ENCODE measurements at regions of chr12 and their contacts with region 1.

Region 1: GRCh38 chr12:674272-674781 is 11.1 kb upstream of the NINJ2 start:
- DNase-seq: peak; percentile 90
- ATAC-seq: peak; percentile 92
- H3K4me3 Mint-ChIP-seq: peak overlapping the region; percentile 55
- H3K27ac Mint-ChIP-seq: peak overlapping the region; percentile 98
- H3K4me1 Mint-ChIP-seq: peaks cover 74% of the 10 kb centered on the region
- H3K27me3 Mint-ChIP-seq: no peaks in the 10 kb centered on the region

Region 2: GRCh38 chr12:685388-685787 is 11.1 kb after region 1 on chr12:
- CTCF ChIA-PET with region 1: interaction called, 11 read pairs
- DNase-seq: peak; percentile 95
- ATAC-seq: peak; percentile 92
- H3K4me3 Mint-ChIP-seq: peak overlapping the region; percentile 29
- H3K27ac Mint-ChIP-seq: peak overlapping the region; percentile 93
- H3K4me1 Mint-ChIP-seq: peaks cover 39% of the 10 kb centered on the region
- H3K27me3 Mint-ChIP-seq: no peaks in the 10 kb centered on the region

Region 3: GRCh38 chr12:724194-724855 is 50.0 kb after region 1 on chr12:
- CTCF ChIA-PET with region 1: interaction called, 10 read pairs
- DNase-seq: no peak
- ATAC-seq: peak; percentile 86
- H3K4me3 Mint-ChIP-seq: no peak overlapping the region
- H3K27ac Mint-ChIP-seq: peak overlapping the region; percentile 75
- H3K4me1 Mint-ChIP-seq: peaks cover 54% of the 10 kb centered on the region
- H3K27me3 Mint-ChIP-seq: no peaks in the 10 kb centered on the region

Region 4: GRCh38 chr12:779745-780734 is 105.7 kb after region 1 on chr12:
- CTCF ChIA-PET with region 1: no interaction called
- DNase-seq: no peak
- ATAC-seq: peak; percentile 61
- H3K4me3 Mint-ChIP-seq: peak overlapping the region; percentile 65
- H3K27ac Mint-ChIP-seq: peak overlapping the region; percentile 72
- H3K4me1 Mint-ChIP-seq: peaks cover 58% of the 10 kb centered on the region
- H3K27me3 Mint-ChIP-seq: no peaks in the 10 kb centered on the region

Measured in activated CD8-positive, alpha-beta memory T cell treated with anti-CD3 and anti-CD28 coated beads, Interleukin-2, amount 10 ng/mL, durations not matched to agents 7 days and 5 days (primary cell).